Right cardiac atrium (tissue), 5 donors: ENCODE measurements at regions of chr9 and their contacts with region 1.

Region 1: DNA sequence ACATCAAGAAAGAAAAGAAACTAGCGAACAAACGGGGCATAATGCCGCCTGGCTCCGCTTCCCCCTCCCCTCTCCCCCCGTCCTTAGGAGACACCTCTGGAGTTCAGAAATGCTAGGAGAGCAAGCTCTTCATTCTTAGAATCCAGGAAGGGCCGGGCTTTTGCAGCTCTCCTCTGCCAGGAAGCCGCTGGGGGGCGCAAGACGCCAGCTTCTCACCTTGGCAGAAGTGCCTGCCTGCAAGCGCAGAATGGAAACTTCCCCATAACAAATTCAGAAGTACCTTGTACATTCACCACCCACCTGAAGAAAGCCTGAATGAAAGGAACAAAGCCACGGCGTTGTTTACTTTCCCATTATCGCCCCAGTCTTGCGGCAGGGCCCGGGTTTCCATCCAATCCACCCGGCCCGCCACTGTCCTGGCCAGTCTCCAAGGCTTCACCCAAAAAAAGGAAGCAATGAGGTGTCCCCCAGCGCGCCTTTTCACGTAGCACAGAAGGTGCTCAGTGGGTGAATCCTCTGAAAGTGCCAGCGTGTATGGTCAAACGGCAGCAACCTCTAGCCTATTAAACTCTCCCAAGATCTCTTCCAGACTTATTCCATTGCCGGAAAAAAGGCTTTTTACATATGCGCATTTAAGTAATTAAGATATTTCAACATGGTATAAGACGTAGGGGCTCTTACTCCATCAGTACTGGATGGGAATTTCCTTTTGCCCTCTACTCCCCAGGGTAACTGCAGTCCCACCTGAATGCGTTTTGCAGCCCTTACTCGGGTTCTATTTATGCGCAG is 1.6 kb upstream of the GADD45G start:
- DNase-seq: peak; percentile 89 to 96 (median 96)
- ATAC-seq: peak; percentile 27 to 30
- H3K4me3 ChIP-seq: peak overlapping the region; percentile 44
- H3K27ac ChIP-seq: peak overlapping the region; percentile 43
- H3K4me1 ChIP-seq: peaks cover 3% of the 10 kb centered on the region
- H3K27me3 ChIP-seq: no peaks in the 10 kb centered on the region

Region 2: DNA sequence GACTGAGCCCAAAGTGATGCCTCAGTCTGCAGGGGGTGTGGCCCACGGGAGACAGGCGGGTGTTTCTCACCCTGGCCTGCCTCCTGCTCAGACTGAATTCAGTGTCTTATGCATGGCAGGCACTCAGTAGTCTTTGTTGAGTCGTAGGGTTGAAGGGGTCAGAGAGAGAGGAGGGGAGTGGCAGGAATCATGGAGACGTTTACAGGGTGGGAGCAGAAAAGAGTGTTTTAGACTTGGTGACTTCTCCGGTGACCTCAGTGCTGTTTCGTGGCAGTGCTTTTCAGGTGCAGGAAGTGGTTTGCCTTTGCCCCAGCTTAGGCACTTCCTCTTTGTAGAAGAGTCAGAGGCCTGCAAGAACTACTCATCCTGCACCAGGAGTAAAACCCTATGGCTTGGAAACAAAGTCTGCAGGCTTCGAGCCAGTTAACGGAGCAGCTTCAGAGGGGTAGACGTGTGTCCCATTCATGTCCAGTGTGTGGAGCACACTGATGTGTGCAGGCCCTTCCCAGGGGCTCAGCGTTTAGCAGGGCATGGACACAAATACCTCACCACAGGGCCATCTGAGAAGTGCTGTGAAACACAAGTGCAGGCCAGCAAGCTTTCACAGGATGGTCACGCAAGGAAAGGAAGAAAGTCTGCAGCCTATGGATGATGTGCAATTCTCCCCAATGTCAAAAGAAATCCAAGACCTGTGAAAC is 80.8 kb before region 1 on chr9:
- intact Hi-C with region 1: no loop called
- DNase-seq: no peak
- ATAC-seq: peak in 1 of 2 donors; percentile 46
- H3K4me3 ChIP-seq: no peak overlapping the region
- H3K27ac ChIP-seq: no peak overlapping the region
- H3K4me1 ChIP-seq: peaks cover 3% of the 10 kb centered on the region
- H3K27me3 ChIP-seq: no peaks in the 10 kb centered on the region

Region 3: DNA sequence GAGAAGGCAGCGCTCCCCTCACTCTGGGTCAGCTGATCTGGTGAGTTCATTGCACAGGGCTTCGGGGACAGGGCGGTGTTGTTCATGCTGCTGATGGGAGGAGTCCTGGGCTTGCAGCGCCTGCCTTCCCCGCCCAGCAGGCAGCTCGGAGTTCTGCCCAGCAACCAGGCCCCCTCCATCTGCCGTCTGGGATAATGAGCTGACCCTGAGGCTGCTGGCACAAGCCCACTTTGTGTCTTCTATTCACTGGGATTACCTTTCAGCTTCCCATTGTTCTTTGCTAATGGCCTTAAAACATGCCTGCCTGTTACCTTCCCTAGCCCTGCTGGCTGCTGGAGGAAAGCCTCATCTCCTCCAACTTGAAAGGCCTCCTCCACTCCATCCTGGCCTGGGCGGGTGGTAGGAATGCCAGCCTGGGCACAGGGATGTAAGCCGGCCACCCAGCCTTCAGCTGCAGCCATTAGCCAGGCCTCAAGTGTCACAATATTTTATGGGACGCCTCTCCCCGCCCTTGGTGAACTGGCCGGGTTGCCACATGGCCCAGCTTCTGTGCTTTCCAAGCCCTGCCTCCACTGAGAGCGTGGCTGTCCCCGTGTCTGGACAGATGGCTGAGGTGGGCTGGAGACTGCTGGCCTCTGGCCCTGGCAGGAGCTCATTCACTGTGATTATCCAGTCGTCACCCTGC is 72.0 kb after region 1 on chr9:
- intact Hi-C with region 1: no loop called
- DNase-seq: peak; percentile 64 to 87 (median 81)
- ATAC-seq: peak; percentile 78 to 86
- H3K4me3 ChIP-seq: no peak overlapping the region
- H3K27ac ChIP-seq: no peak overlapping the region
- H3K4me1 ChIP-seq: peaks cover 2% of the 10 kb centered on the region
- H3K27me3 ChIP-seq: no peaks in the 10 kb centered on the region

Region 4: GRCh38 chr9:89743573-89744361 is 140.6 kb after region 1 on chr9:
- intact Hi-C with region 1: loop called in 1 of 4 experiments (anchors 10 kb)
- DNase-seq: no peak
- ATAC-seq: no peak
- H3K4me3 ChIP-seq: no peak overlapping the region
- H3K27ac ChIP-seq: no peak overlapping the region
- H3K4me1 ChIP-seq: peaks cover 3% of the 10 kb centered on the region
- H3K27me3 ChIP-seq: no peaks in the 10 kb centered on the region

Region 5: GRCh38 chr9:89750147-89750861 is 147.1 kb after region 1 on chr9:
- intact Hi-C with region 1: loop called in 2 of 4 experiments (anchors 10 kb)
- DNase-seq: peak; percentile 69 to 85 (median 84)
- ATAC-seq: peak; percentile 59 to 69
- H3K4me3 ChIP-seq: no peak overlapping the region
- H3K27ac ChIP-seq: no peak overlapping the region
- H3K4me1 ChIP-seq: peaks cover 5% of the 10 kb centered on the region
- H3K27me3 ChIP-seq: no peaks in the 10 kb centered on the region

Region 6: DNA sequence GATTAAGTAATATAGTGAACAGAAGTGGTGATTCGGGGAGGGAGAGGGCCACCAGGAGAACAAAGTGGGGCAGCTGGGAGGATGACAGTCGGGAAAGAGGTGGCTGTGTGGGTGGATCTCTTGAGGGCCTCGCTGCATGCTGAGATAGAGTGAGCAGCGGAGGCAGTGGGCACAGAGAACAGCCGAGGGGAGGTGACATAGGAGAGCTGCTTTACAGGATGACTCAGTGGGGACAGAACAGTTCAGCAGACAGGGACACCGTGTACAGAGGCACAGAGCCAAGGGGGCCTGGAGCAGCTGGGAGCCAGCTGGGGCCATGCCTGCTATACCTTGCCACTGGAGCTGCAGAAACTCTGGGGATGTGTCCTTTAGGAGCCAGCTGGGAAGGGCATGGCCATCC is 275.5 kb after region 1 on chr9:
- intact Hi-C with region 1: loop called in 1 of 4 experiments (anchors 10 kb)
- DNase-seq: peak; percentile 84 to 91 (median 91)
- ATAC-seq: peak; percentile 86 to 87
- H3K4me3 ChIP-seq: no peak overlapping the region
- H3K27ac ChIP-seq: peak overlapping the region; percentile 97
- H3K4me1 ChIP-seq: peaks cover 25% of the 10 kb centered on the region
- H3K27me3 ChIP-seq: no peaks in the 10 kb centered on the region

Region 7: GRCh38 chr9:89919169-89919681 is 316.1 kb after region 1 on chr9:
- intact Hi-C with region 1: loop called in 2 of 4 experiments (anchors 5 kb)
- DNase-seq: peak in 1 of 3 donors; percentile 64
- ATAC-seq: peak; percentile 77 to 90
- H3K4me3 ChIP-seq: no peak overlapping the region
- H3K27ac ChIP-seq: no peak overlapping the region
- H3K4me1 ChIP-seq: no peaks in the 10 kb centered on the region
- H3K27me3 ChIP-seq: no peaks in the 10 kb centered on the region

Region 8: GRCh38 chr9:89999534-90000370 is 396.6 kb after region 1 on chr9:
- intact Hi-C with region 1: loop called in 2 of 4 experiments (anchors 10 kb)
- DNase-seq: peak; percentile 55 to 88 (median 85)
- ATAC-seq: peak; percentile 86 to 88
- H3K4me3 ChIP-seq: no peak overlapping the region
- H3K27ac ChIP-seq: peak overlapping the region; percentile 84
- H3K4me1 ChIP-seq: peaks cover 19% of the 10 kb centered on the region
- H3K27me3 ChIP-seq: no peaks in the 10 kb centered on the region